HepG2 (cell line): ENCODE measurements at regions of chr20 and their contacts with region 1.

Region 1: GRCh38 chr20:62065669-62066338 is at the start of gene TAF4:
- DNase-seq: peak; percentile 59
- ATAC-seq: no peak
- H3K4me3 ChIP-seq: peak within 1 kb of the TSS; percentile 70 to 81 (median 73)
- H3K27ac ChIP-seq: peak within 1 kb of the TSS; percentile 84
- H3K4me1 ChIP-seq: peaks cover 66% of the 10 kb centered on the region
- H3K27me3 ChIP-seq: no peaks in the 10 kb centered on the region
- CTCF ChIP-seq: no peak
- EP300 ChIP-seq: 0 out of 4 replicates have a peak, but pooled peaks of 1 of the 2 experiments have one; percentile 22
- POLR2A ChIP-seq: peak; percentile 92 to 95
- RAD21 ChIP-seq: peak; percentile 59; the same call in 1 of the 2 replicates
- total RNA-seq, gene TAF4: 12.0 and 12.2 TPM in 2 replicates

Region 2: GRCh38 chr20:62010551-62011402 is 55.0 kb before region 1 on chr20:
- CTCF ChIA-PET with region 1: no interaction called
- POLR2A ChIA-PET with region 1: interaction called, 13 read pairs
- in situ Hi-C with region 1: loop called (anchors 5 kb)
- intact Hi-C with region 1: loop called (anchors 2 kb)
- DNase-seq: peak; percentile 64
- ATAC-seq: peak; percentile 84
- H3K4me3 ChIP-seq: no peak overlapping the region
- H3K27ac ChIP-seq: no peak overlapping the region
- H3K4me1 ChIP-seq: no peaks in the 10 kb centered on the region
- H3K27me3 ChIP-seq: no peaks in the 10 kb centered on the region
- CTCF ChIP-seq: peak; percentile 93
- EP300 ChIP-seq: no peak
- POLR2A ChIP-seq: no peak
- RAD21 ChIP-seq: peak; percentile 97

Region 3: DNA sequence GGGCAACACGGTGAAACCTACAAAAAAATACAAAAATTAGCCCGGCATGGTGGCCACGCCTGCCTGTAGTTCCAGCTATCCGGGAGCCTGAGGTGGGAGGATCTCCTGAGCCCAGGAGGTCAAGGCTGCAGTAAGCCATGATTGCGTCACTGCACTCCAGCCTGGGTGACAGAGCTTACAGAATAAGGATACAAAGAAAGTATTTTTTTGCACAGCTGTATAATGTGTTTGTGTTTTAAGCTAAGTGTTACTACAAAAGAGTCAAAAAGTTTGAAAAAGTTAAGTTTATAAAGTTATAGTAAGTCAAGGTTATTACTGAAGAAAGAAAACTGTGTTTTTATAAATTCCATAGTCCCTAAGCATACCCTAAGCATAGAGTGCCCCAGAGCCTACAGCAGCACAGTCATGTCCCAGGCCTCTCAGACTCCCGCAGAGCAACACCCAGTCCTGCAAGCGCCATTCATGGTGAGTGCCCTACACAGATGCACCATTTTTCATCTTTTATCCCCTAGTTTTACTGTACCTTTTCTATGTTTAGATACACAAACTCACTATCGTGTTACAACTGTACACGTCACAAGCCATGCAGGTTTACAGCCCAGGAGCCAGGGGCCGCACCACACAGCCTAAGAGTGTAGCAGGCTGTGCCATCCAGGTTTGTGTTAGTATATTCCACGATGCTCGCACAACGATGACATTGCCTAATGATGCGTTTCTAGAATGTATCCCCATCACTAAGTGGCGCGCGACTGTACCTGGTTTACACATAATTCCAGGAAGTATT is 22.5 kb before region 1 on chr20:
- CTCF ChIA-PET with region 1: no interaction called
- POLR2A ChIA-PET with region 1: interaction called, 30 read pairs
- in situ Hi-C with region 1: no loop called
- intact Hi-C with region 1: loop called (anchors 2 kb)
- DNase-seq: peak; percentile 93
- ATAC-seq: peak; percentile 94
- H3K4me3 ChIP-seq: peak overlapping the region; percentile 33 to 54 (median 43)
- H3K27ac ChIP-seq: peak overlapping the region; percentile 71
- H3K4me1 ChIP-seq: peaks cover 35% of the 10 kb centered on the region
- H3K27me3 ChIP-seq: no peaks in the 10 kb centered on the region
- CTCF ChIP-seq: no peak
- EP300 ChIP-seq: peak; percentile 72 to 86
- POLR2A ChIP-seq: 0 out of 4 replicates have a peak, but pooled peaks of 1 of the 2 experiments have one; percentile 19
- RAD21 ChIP-seq: peak; percentile 36; the same call in 1 of the 2 replicates

Region 4: GRCh38 chr20:62079166-62079565 is 13.4 kb after region 1 on chr20:
- CTCF ChIA-PET with region 1: no interaction called
- POLR2A ChIA-PET with region 1: no interaction called
- in situ Hi-C with region 1: no loop called
- intact Hi-C with region 1: no loop called
- DNase-seq: no peak
- ATAC-seq: no peak
- H3K4me3 ChIP-seq: no peak overlapping the region
- H3K27ac ChIP-seq: no peak overlapping the region
- H3K4me1 ChIP-seq: peaks cover 7% of the 10 kb centered on the region; the same call in 1 of the 2 replicates
- H3K27me3 ChIP-seq: peaks cover 4 to 36% of the 10 kb centered on the region in 2 experiments; a peak in 3 of 5 replicates
- CTCF ChIP-seq: no peak
- EP300 ChIP-seq: no peak
- POLR2A ChIP-seq: no peak
- RAD21 ChIP-seq: no peak

Region 5: GRCh38 chr20:62104791-62105345 is 39.1 kb after region 1 on chr20:
- CTCF ChIA-PET with region 1: no interaction called
- POLR2A ChIA-PET with region 1: interaction called, 12 read pairs
- in situ Hi-C with region 1: no loop called
- intact Hi-C with region 1: no loop called
- DNase-seq: no peak
- ATAC-seq: no peak
- H3K4me3 ChIP-seq: no peak overlapping the region
- H3K27ac ChIP-seq: no peak overlapping the region
- H3K4me1 ChIP-seq: peaks cover 13% of the 10 kb centered on the region
- H3K27me3 ChIP-seq: peaks cover 18 to 40% of the 10 kb centered on the region in 2 experiments
- CTCF ChIP-seq: no peak
- EP300 ChIP-seq: no peak
- POLR2A ChIP-seq: no peak
- RAD21 ChIP-seq: no peak

Region 6: DNA sequence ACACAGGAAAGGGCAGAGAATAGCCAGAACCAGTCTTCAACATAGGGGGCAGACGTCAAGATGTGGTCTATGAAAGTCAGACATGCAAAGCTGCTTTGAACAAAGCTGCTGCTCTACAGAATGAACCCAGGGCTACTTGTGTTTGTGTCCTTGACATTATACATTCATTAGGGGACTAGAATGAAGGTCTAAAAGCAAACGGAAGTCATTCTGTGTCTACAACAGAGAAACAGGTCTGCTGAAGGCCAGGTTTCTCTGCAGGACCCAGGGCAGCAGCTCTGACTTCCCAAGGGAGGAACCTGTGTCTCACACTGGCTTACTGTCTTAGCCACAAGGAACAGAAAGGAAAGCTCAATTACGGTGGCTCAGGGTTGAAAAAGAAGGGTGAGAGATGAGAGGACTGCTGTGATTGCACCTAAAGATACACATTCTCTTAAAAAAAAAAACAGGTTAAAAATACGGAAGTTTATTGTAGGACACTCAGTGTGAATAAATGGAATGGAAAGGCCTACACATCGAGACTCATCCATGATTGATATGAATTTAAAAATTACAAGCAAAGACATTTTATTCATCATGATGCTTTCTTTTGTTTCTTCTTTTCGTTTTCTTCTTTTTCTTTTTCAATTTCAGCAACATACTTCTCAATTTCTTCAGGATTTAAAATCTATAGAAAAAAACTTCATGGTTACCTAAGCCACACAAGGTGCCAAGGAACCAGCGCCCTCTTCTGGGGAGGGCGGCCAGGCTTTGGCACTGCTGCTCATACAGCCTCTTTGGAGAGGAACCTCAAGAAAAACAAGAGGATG is 70.7 kb after region 1 on chr20:
- CTCF ChIA-PET with region 1: interaction called, 3 read pairs
- POLR2A ChIA-PET with region 1: interaction called, 43 read pairs
- in situ Hi-C with region 1: no loop called
- intact Hi-C with region 1: loop called (anchors 5 kb)
- DNase-seq: peak; percentile 74
- ATAC-seq: peak; percentile 39
- H3K4me3 ChIP-seq: no peak overlapping the region
- H3K27ac ChIP-seq: peak overlapping the region; percentile 13
- H3K4me1 ChIP-seq: peaks cover 45% of the 10 kb centered on the region
- H3K27me3 ChIP-seq: no peaks in the 10 kb centered on the region
- CTCF ChIP-seq: peak; percentile 88
- EP300 ChIP-seq: no peak
- POLR2A ChIP-seq: peak; percentile 11 to 30; a peak in 1 of 4 replicates
- RAD21 ChIP-seq: peak; percentile 84

Region 7: DNA sequence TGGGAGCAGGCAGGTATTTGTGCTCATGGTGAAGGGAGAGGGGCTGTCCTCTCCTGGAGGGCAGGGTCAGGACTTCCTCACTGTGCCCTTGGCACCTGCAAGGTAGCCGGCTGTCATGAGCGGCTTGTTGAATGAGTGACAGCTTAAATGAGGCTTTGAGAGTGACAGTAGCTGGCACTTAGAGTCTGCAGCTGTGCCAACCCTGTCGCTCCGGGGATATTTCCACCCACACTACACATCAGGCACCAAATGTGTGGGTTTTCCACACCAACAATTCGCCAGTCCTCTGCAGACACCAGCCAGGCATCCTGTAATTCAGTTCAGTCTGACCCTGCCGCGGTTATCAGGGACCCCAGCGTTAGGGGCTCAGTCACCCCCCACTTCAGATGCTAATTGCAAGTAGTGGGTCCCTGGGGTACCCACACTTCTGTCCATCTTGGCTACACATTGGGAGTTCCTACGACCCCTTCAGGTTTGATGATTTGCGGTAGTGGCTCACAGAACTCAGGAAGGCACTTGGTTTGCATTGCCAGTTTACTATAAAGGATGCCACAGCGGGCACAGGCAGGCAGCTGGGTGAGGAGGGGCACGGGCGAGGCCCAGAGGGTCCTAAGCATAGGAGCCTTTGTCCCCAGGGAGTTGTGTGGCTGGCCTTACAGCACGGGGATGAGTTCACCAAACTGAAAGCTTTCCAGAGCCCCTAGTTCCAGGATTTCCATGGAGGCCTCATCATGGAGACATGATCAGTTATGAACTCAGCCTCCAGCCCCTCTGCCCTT is 126.2 kb after region 1 on chr20:
- CTCF ChIA-PET with region 1: no interaction called
- POLR2A ChIA-PET with region 1: no interaction called
- in situ Hi-C with region 1: no loop called
- intact Hi-C with region 1: no loop called
- DNase-seq: no peak
- ATAC-seq: peak; percentile 36; the same call in 2 of the 3 replicates
- H3K4me3 ChIP-seq: no peak overlapping the region
- H3K27ac ChIP-seq: no peak overlapping the region
- H3K4me1 ChIP-seq: peaks cover 8% of the 10 kb centered on the region
- H3K27me3 ChIP-seq: no peaks in the 10 kb centered on the region
- CTCF ChIP-seq: no peak
- EP300 ChIP-seq: no peak
- POLR2A ChIP-seq: no peak
- RAD21 ChIP-seq: no peak

Region 8: GRCh38 chr20:62368976-62369814 is 303.4 kb after region 1 on chr20:
- CTCF ChIA-PET with region 1: no interaction called
- POLR2A ChIA-PET with region 1: interaction called, 12 read pairs
- in situ Hi-C with region 1: no loop called
- intact Hi-C with region 1: no loop called
- DNase-seq: peak; percentile 66
- ATAC-seq: peak; percentile 30
- H3K4me3 ChIP-seq: peak overlapping the region; percentile 65 to 95 (median 91)
- H3K27ac ChIP-seq: peak overlapping the region; percentile 95
- H3K4me1 ChIP-seq: peaks cover 75% of the 10 kb centered on the region
- H3K27me3 ChIP-seq: no peaks in the 10 kb centered on the region
- CTCF ChIP-seq: peak; percentile 65
- EP300 ChIP-seq: no peak; a peak in 1 of 4 replicates
- POLR2A ChIP-seq: 0 out of 4 replicates have a peak, but pooled peaks of 1 of the 2 experiments have one; percentile 6
- RAD21 ChIP-seq: peak; percentile 5; the same call in 1 of the 2 replicates